ENCODE measurements at regions of chr19 and their contacts with region 1.

Region 1: GRCh38 chr19:11137542-11138384 is 17.8 kb downstream of the SPC24 start:
- DNase-seq: peak; percentile 75
- ATAC-seq: peak; percentile 50
- H3K4me3 ChIP-seq: peak overlapping the region; percentile 50 to 71 (median 59)
- H3K27ac ChIP-seq: no peak overlapping the region
- H3K4me1 ChIP-seq: peaks cover 54% of the 10 kb centered on the region
- H3K27me3 ChIP-seq: no peaks in the 10 kb centered on the region; a peak in 1 of 5 replicates
- CTCF ChIP-seq: peak; percentile 95
- EP300 ChIP-seq: no peak
- POLR2A ChIP-seq: no peak
- RAD21 ChIP-seq: peak; percentile 94

Region 2: GRCh38 chr19:11106477-11106876 is 31.3 kb before region 1 on chr19:
- CTCF ChIA-PET with region 1: no interaction called
- POLR2A ChIA-PET with region 1: no interaction called
- in situ Hi-C with region 1: no loop called
- intact Hi-C with region 1: no loop called
- DNase-seq: no peak
- ATAC-seq: no peak
- H3K4me3 ChIP-seq: no peak overlapping the region
- H3K27ac ChIP-seq: no peak overlapping the region
- H3K4me1 ChIP-seq: no peaks in the 10 kb centered on the region
- H3K27me3 ChIP-seq: no peaks in the 10 kb centered on the region; a peak in 1 of 5 replicates
- CTCF ChIP-seq: no peak
- EP300 ChIP-seq: no peak
- POLR2A ChIP-seq: 0 out of 4 replicates have a peak, but pooled peaks of 1 of the 2 experiments have one; percentile 39
- RAD21 ChIP-seq: no peak

Region 3: GRCh38 chr19:11125994-11126685 is 11.6 kb before region 1 on chr19:
- CTCF ChIA-PET with region 1: interaction called, 3 read pairs
- POLR2A ChIA-PET with region 1: interaction called, 24 read pairs
- in situ Hi-C with region 1: no loop called
- intact Hi-C with region 1: no loop called
- DNase-seq: peak; percentile 67
- ATAC-seq: peak; percentile 50
- H3K4me3 ChIP-seq: no peak overlapping the region
- H3K27ac ChIP-seq: peak overlapping the region; percentile 36
- H3K4me1 ChIP-seq: peaks cover 51% of the 10 kb centered on the region
- H3K27me3 ChIP-seq: no peaks in the 10 kb centered on the region
- CTCF ChIP-seq: peak; percentile 80
- EP300 ChIP-seq: no peak
- POLR2A ChIP-seq: no peak
- RAD21 ChIP-seq: 0 out of 2 replicates have a peak, but pooled peaks have one; percentile 35

Region 4: DNA sequence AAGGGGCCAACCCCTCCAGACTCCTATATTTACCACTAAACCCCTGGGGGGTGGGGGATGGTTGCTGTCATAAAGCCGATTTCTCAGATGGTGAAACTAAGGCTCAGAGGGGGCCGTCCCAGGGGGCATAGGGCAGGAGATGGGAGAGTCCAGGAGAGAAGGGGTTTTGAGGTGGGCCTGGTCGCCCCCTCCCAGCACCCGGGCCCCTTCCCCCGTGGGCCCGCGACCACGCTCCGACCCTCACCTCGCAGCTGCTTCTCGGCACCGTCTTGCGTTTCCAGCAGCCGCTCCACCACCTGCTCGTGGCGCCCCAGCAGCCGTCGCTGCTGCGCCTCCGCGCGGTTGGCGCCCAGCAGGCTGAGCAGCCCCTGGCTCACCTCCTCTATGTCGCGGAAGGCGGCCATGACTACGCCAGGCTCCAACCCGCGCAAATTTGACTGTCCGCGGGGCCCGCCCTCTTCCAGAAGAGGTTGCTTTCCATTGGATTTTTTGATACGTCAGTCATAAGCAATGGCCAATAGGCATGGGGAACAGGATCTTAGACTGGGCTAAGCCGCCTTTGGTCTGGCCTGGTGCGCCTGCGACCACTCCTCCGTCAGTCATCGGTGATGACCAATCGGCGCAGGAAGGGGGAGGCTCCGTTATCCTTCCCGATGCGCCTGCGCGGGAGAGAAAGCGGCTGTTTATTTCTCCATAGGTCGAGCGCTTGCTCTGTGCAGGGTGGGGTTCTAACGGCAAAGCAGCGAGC is 17.8 kb after region 1 on chr19 and contains the start of gene SPC24:
- CTCF ChIA-PET with region 1: no interaction called
- POLR2A ChIA-PET with region 1: interaction called, 39 read pairs
- in situ Hi-C with region 1: no loop called
- intact Hi-C with region 1: loop called (anchors 1 kb)
- DNase-seq: peak; percentile 98
- ATAC-seq: peak; percentile 97
- H3K4me3 ChIP-seq: peak within 1 kb of the TSS; percentile 92 to 99 (median 93)
- H3K27ac ChIP-seq: peak within 1 kb of the TSS; percentile 49
- H3K4me1 ChIP-seq: peaks cover 65% of the 10 kb centered on the region
- H3K27me3 ChIP-seq: no peaks in the 10 kb centered on the region; a peak in 1 of 5 replicates
- CTCF ChIP-seq: peak; percentile 29
- EP300 ChIP-seq: no peak
- POLR2A ChIP-seq: peak; percentile 75 to 76
- RAD21 ChIP-seq: peak; percentile 33; the same call in 1 of the 2 replicates
- total RNA-seq, gene SPC24: 46.2 and 63.2 TPM in 2 replicates

Region 5: GRCh38 chr19:11197264-11198174 is 59.8 kb after region 1 on chr19 and contains the start of gene KANK2:
- CTCF ChIA-PET with region 1: interaction called, 53 read pairs
- POLR2A ChIA-PET with region 1: interaction called, 21 read pairs
- in situ Hi-C with region 1: loop called (anchors 5 kb)
- intact Hi-C with region 1: no loop called
- DNase-seq: peak; percentile 68
- ATAC-seq: peak; percentile 86
- H3K4me3 ChIP-seq: peak within 1 kb of the TSS; percentile 72 to 89 (median 83)
- H3K27ac ChIP-seq: peak within 1 kb of the TSS; percentile 49
- H3K4me1 ChIP-seq: peaks cover 18% of the 10 kb centered on the region
- H3K27me3 ChIP-seq: no peaks in the 10 kb centered on the region; a peak in 1 of 5 replicates
- CTCF ChIP-seq: peak; percentile 60
- EP300 ChIP-seq: no peak; a peak in 1 of 4 replicates
- POLR2A ChIP-seq: peak; percentile 58 to 86
- RAD21 ChIP-seq: peak; percentile 69
- total RNA-seq, gene KANK2: 11.0 and 12.9 TPM in 2 replicates

Region 6: GRCh38 chr19:11203194-11204075 is 65.7 kb after region 1 on chr19:
- CTCF ChIA-PET with region 1: interaction called, 53 read pairs
- POLR2A ChIA-PET with region 1: interaction called, 21 read pairs
- in situ Hi-C with region 1: loop called (anchors 5 kb)
- intact Hi-C with region 1: loop called (anchors 1 kb)
- DNase-seq: peak; percentile 35
- ATAC-seq: peak; percentile 77
- H3K4me3 ChIP-seq: no peak overlapping the region
- H3K27ac ChIP-seq: no peak overlapping the region
- H3K4me1 ChIP-seq: peaks cover 5% of the 10 kb centered on the region
- H3K27me3 ChIP-seq: no peaks in the 10 kb centered on the region
- CTCF ChIP-seq: peak; percentile 90
- EP300 ChIP-seq: no peak
- POLR2A ChIP-seq: no peak
- RAD21 ChIP-seq: peak; percentile 76

Region 7: DNA sequence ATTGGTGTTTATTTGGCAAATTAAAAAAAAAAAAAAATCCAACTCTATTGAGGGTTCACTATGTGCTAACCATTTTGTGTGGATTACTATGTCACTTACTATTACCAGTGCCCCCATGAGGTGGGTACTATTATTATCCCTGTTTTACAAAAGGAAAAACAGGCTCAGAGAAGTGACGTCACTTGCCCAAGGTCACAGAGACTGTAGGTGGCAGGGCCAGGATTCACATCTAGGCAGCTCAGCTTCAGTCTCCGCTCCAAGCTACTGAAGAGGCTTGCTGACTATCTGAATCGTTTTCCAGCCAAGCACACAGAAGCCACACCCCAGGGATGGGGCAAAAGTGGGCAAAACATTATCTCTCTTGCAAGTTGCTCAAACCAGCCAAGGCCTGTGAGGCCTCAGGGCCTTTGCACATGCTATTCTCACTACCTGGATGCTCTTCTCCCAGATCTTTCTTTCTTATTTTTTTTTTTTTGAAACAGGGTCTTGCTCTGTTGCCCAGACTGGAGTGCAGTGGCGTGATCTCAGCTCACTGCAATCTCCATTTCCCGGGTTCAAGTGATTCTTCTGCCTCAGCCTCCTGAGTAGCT is 96.8 kb after region 1 on chr19:
- CTCF ChIA-PET with region 1: no interaction called
- POLR2A ChIA-PET with region 1: interaction called, 22 read pairs
- in situ Hi-C with region 1: no loop called
- intact Hi-C with region 1: no loop called
- DNase-seq: peak; percentile 75
- ATAC-seq: no peak
- H3K4me3 ChIP-seq: no peak overlapping the region
- H3K27ac ChIP-seq: no peak overlapping the region
- H3K4me1 ChIP-seq: peaks cover 77% of the 10 kb centered on the region
- H3K27me3 ChIP-seq: no peaks in the 10 kb centered on the region
- CTCF ChIP-seq: no peak
- EP300 ChIP-seq: no peak
- POLR2A ChIP-seq: no peak
- RAD21 ChIP-seq: no peak